ENCODE measurements at regions of chr6 and their contacts with region 1.

Region 1: DNA sequence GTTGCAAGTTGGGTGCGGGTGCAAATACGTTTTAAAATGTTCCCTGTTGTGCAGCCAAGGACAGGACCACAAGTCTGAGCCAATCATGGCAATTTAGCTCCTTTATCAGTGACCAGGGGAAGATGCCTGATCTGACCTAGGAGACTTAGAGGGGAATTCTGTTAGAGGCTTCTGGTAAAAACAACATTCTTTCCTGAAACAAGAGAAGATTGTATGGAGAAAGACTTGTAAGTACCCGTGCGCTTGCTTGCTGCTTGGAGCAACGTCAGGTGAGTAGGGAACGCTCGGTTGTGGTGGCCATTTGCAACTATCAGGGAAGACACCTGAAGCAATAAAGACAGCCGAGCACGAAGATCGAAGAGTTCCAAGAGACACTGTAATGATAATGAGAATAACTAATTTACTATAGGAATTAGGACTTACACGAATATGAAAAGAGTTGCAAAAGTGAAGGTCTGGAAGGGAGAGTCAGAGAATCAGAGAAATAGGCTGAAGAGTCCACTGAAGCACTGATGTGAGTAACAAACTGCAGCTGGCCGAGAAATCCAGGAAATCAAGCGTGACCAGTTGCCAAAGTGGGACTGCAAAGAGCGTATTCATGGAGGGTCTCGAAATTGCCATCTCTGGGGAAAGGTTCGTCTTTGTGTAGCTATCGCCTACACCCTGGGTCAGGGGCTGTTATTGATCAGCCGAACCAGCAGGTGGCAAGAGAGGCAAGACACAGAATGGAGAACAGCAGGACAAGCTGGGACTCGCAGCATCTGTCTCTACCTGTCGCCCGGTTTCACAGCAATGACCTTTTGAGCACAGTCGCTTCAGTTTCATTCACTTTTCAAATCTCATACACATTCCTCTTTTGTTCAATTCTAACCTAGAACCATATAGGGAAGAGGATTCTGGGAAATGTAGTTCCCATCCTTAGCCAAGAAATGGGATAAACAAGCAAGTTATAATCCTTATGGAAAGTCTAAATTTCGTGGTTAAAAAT is 26.1 kb downstream of the LOC128125822 start:
- DNase-seq: peak; percentile 52 to 86 (median 73)
- ATAC-seq: peak; percentile 99
- H3K4me3 ChIP-seq: peak overlapping the region; percentile 52 to 55
- H3K4me3 Mint-ChIP-seq: peak overlapping the region; percentile 84
- H3K27ac ChIP-seq: no peak overlapping the region
- H3K27ac Mint-ChIP-seq: no peak overlapping the region
- H3K4me1 ChIP-seq: no peaks in the 10 kb centered on the region
- H3K4me1 Mint-ChIP-seq: peaks cover 12% of the 10 kb centered on the region
- H3K27me3 ChIP-seq: peaks cover 0 to 5% of the 10 kb centered on the region in 2 experiments
- H3K27me3 Mint-ChIP-seq: peaks cover 8% of the 10 kb centered on the region
- CTCF ChIP-seq: peak; percentile 89

Region 2: GRCh38 chr6:63571881-63572732 is 26.2 kb before region 1 on chr6 and contains the starts of genes LOC128125822 and PTP4A1:
- CTCF ChIA-PET with region 1: interaction called, 9 read pairs
- POLR2A ChIA-PET with region 1: no interaction called
- intact Hi-C with region 1: loop called in 1 of 2 experiments (anchors 1 kb)
- DNase-seq: peak; percentile 94 to 99 (median 96)
- ATAC-seq: peak; percentile 83
- H3K4me3 ChIP-seq: peak within 1 kb of the TSS; percentile 66 to 85
- H3K4me3 Mint-ChIP-seq: peak within 1 kb of the TSS; percentile 93
- H3K27ac ChIP-seq: peak within 1 kb of the TSS; percentile 97 to 98
- H3K27ac Mint-ChIP-seq: peak within 1 kb of the TSS; percentile 98
- H3K4me1 ChIP-seq: peaks cover 27% of the 10 kb centered on the region
- H3K4me1 Mint-ChIP-seq: peaks cover 41% of the 10 kb centered on the region
- H3K27me3 ChIP-seq: no peaks in the 10 kb centered on the region
- H3K27me3 Mint-ChIP-seq: no peaks in the 10 kb centered on the region
- CTCF ChIP-seq: no peak
- total RNA-seq, gene PTP4A1: 329 to 360 TPM

Region 3: DNA sequence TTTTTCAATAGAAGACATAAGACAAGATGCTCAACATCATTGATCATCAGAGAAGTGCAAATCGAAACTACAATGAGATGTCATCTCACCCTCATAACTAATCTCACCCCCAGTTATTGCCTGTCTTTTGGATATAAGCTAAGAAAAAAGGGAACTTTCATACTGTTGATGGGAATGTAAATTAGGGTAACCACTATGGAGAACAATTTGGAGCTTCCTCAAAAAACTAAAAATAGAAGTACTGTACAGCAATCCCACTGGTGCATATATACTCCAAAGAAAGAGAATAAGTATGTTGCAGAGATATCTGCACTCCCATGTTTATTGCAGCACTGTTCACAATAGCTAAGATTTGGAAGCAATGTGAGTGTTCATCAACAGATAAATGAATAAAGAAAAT is 10.9 kb after region 1 on chr6:
- CTCF ChIA-PET with region 1: interaction called, 18 read pairs
- POLR2A ChIA-PET with region 1: no interaction called
- intact Hi-C with region 1: no loop called
- DNase-seq: no peak
- ATAC-seq: no peak
- H3K4me3 ChIP-seq: no peak overlapping the region
- H3K4me3 Mint-ChIP-seq: no peak overlapping the region
- H3K27ac ChIP-seq: no peak overlapping the region
- H3K27ac Mint-ChIP-seq: no peak overlapping the region
- H3K4me1 ChIP-seq: no peaks in the 10 kb centered on the region
- H3K4me1 Mint-ChIP-seq: no peaks in the 10 kb centered on the region
- H3K27me3 ChIP-seq: no peaks in the 10 kb centered on the region
- H3K27me3 Mint-ChIP-seq: peaks cover 5% of the 10 kb centered on the region
- CTCF ChIP-seq: no peak

Region 4: GRCh38 chr6:63685446-63686379 is 87.4 kb after region 1 on chr6:
- CTCF ChIA-PET with region 1: interaction called, 9 read pairs
- POLR2A ChIA-PET with region 1: no interaction called
- intact Hi-C with region 1: loop called in 1 of 2 experiments (anchors 5 kb)
- DNase-seq: peak in 1 of 9 experiments; percentile 8
- ATAC-seq: no peak
- H3K4me3 ChIP-seq: no peak overlapping the region
- H3K4me3 Mint-ChIP-seq: no peak overlapping the region
- H3K27ac ChIP-seq: no peak overlapping the region
- H3K27ac Mint-ChIP-seq: no peak overlapping the region
- H3K4me1 ChIP-seq: peaks cover 5% of the 10 kb centered on the region
- H3K4me1 Mint-ChIP-seq: peaks cover 48% of the 10 kb centered on the region
- H3K27me3 ChIP-seq: no peaks in the 10 kb centered on the region
- H3K27me3 Mint-ChIP-seq: no peaks in the 10 kb centered on the region
- CTCF ChIP-seq: no peak

Region 5: GRCh38 chr6:63750400-63750799 is 152.1 kb after region 1 on chr6:
- CTCF ChIA-PET with region 1: interaction called, 15 read pairs
- POLR2A ChIA-PET with region 1: no interaction called
- intact Hi-C with region 1: no loop called
- DNase-seq: no peak
- ATAC-seq: no peak
- H3K4me3 ChIP-seq: no peak overlapping the region
- H3K4me3 Mint-ChIP-seq: no peak overlapping the region
- H3K27ac ChIP-seq: no peak overlapping the region
- H3K27ac Mint-ChIP-seq: no peak overlapping the region
- H3K4me1 ChIP-seq: no peaks in the 10 kb centered on the region
- H3K4me1 Mint-ChIP-seq: no peaks in the 10 kb centered on the region
- H3K27me3 ChIP-seq: no peaks in the 10 kb centered on the region
- H3K27me3 Mint-ChIP-seq: peaks cover 6% of the 10 kb centered on the region
- CTCF ChIP-seq: no peak

Region 6: GRCh38 chr6:63774961-63775360 is 176.6 kb after region 1 on chr6:
- CTCF ChIA-PET with region 1: interaction called, 44 read pairs
- POLR2A ChIA-PET with region 1: no interaction called
- intact Hi-C with region 1: no loop called
- DNase-seq: no peak
- ATAC-seq: no peak
- H3K4me3 ChIP-seq: no peak overlapping the region
- H3K4me3 Mint-ChIP-seq: no peak overlapping the region
- H3K27ac ChIP-seq: no peak overlapping the region
- H3K27ac Mint-ChIP-seq: no peak overlapping the region
- H3K4me1 ChIP-seq: no peaks in the 10 kb centered on the region
- H3K4me1 Mint-ChIP-seq: no peaks in the 10 kb centered on the region
- H3K27me3 ChIP-seq: peaks cover 0 to 3% of the 10 kb centered on the region in 2 experiments
- H3K27me3 Mint-ChIP-seq: peaks cover 17% of the 10 kb centered on the region
- CTCF ChIP-seq: no peak

Region 7: GRCh38 chr6:63963769-63964315 is 365.5 kb after region 1 on chr6:
- CTCF ChIA-PET with region 1: no interaction called
- POLR2A ChIA-PET with region 1: no interaction called
- intact Hi-C with region 1: no loop called
- DNase-seq: no peak
- ATAC-seq: no peak
- H3K4me3 ChIP-seq: no peak overlapping the region
- H3K4me3 Mint-ChIP-seq: no peak overlapping the region
- H3K27ac ChIP-seq: no peak overlapping the region
- H3K27ac Mint-ChIP-seq: no peak overlapping the region
- H3K4me1 ChIP-seq: no peaks in the 10 kb centered on the region
- H3K4me1 Mint-ChIP-seq: no peaks in the 10 kb centered on the region
- H3K27me3 ChIP-seq: no peaks in the 10 kb centered on the region
- H3K27me3 Mint-ChIP-seq: no peaks in the 10 kb centered on the region
- CTCF ChIP-seq: no peak

Measured in CD8-positive, alpha-beta T cell (primary cell).